ENCODE measurements at regions of chr17 and their contacts with region 1.

Region 1: DNA sequence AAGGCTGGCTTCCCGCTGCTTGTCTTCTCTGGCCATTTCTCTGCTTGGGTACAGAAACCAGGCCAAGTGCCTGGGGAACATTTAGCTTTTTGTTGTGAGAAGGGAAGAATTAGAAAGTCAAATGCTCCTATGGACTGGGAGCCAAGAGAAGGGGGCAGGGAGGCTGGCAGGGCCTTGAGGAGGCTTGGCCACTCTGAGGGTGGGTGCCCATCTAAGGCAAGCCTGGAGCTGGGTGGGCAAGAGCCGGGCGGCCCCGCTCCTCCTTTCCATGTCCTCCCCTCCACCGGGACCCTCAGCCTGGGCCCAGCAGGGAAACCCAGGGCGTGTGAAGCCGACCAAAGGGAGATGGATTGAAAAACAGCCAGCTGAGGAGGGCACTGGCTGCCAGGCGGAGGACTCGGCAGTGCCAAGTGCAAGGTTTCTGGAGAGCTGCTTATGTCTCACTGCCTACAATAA is 69.4 kb downstream of the NTN1 start:
- DNase-seq: peak; percentile 18 to 84
- H3K4me3 ChIP-seq: peak overlapping the region in 1 of 2 donors; percentile 33
- H3K27ac ChIP-seq: peak overlapping the region; percentile 74 to 83
- H3K4me1 ChIP-seq: peaks cover 7 to 18% of the 10 kb centered on the region in 2 donors
- H3K27me3 ChIP-seq: no peaks in the 10 kb centered on the region
- CTCF ChIP-seq: no peak

Region 2: GRCh38 chr17:9028202-9028987 is 62.3 kb before region 1 on chr17:
- intact Hi-C with region 1: loop called (anchors 2 kb)
- DNase-seq: peak in 1 of 2 donors; percentile 61
- H3K4me3 ChIP-seq: peak overlapping the region in 1 of 2 donors; percentile 34
- H3K27ac ChIP-seq: peak overlapping the region; percentile 59 to 66
- H3K4me1 ChIP-seq: peaks cover 0 to 7% of the 10 kb centered on the region in 2 donors
- H3K27me3 ChIP-seq: no peaks in the 10 kb centered on the region
- CTCF ChIP-seq: no peak

Region 3: DNA sequence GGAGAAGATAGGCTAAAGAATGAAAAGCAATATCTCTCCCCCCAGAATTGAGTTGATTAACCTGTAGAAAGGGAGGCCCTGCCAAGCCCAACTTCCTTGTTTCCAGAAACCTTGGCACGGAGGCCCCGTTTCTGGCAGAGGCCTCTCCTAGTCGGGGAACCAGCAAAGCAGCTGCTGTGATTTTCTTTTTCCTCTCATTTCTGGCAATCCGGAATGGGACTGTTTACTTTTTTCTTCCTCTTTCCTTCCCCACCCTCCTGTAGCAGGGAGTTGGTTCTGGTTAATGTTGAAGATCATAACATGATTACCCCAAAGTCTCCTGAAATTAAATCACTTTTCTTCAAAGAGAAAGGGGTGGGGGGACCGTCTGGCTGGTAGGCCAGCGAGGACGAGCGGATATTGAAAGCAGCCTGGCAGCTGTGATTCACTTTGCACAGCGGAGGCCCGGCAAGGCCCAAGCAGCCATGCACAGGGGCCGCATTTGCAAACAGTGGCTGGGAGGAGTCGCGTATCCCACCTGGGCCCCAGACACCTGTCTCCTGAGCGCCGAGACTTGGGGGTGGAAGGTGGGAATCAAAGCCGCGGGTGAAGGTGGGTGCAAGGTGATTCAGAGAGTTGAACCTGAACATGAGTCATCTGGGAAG is 17.9 kb before region 1 on chr17:
- intact Hi-C with region 1: loop called (anchors 2 kb)
- DNase-seq: peak in 1 of 2 donors; percentile 84
- H3K4me3 ChIP-seq: peak overlapping the region; percentile 4 to 46
- H3K27ac ChIP-seq: peak overlapping the region; percentile 69 to 82
- H3K4me1 ChIP-seq: peaks cover 14 to 34% of the 10 kb centered on the region in 2 donors
- H3K27me3 ChIP-seq: no peaks in the 10 kb centered on the region
- CTCF ChIP-seq: no peak

Region 4: DNA sequence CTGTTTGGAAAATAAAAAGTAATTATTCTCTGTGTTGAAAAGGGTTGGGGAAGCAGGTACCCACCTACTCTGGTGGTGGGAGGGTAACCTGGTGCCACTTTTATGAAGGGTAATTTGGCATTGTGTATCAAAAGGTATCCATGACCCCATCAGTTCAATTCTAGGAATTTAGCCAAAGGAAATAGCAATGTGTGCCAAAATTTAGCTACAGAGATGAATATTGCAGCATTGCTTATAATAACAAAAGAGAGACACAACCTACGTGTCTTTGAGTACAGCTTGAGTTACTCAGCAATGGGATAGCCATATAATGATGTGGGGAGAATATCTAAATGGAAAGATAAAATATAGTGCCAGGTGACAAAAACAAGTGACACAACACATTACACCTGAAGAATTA is 101.3 kb after region 1 on chr17:
- intact Hi-C with region 1: no loop called
- DNase-seq: no peak
- H3K4me3 ChIP-seq: no peak overlapping the region
- H3K27ac ChIP-seq: no peak overlapping the region
- H3K4me1 ChIP-seq: peaks cover 0 to 7% of the 10 kb centered on the region in 2 donors
- H3K27me3 ChIP-seq: no peaks in the 10 kb centered on the region
- CTCF ChIP-seq: no peak